Activated naive CD4-positive, alpha-beta T cell treated with anti-CD3 and anti-CD28 coated beads for 36 hours (primary cell): ENCODE measurements at regions of chr3 and their contacts with region 1.

Region 1: DNA sequence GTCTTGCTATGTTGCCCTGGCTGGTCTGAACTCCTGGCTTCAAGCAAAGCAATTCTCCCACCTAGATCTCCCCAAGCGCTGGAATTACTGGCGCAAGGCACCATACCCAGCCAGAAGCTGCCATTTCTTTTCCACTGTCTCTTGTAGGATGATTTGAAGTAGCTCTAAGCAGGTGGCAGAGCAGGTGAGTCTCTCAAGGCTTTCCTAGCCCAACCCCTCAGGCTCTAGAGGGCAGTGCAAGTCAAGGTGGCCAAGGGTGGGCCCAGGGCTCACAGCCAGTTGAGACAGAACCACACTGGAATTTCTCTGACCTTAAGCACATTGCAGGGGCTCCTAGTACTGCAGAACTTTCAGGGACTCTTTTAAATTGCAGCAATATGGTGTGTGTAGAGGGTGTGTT is 15.6 kb upstream of the DAG1 start:
- DNase-seq: peak; percentile 30
- H3K4me3 Mint-ChIP-seq: no peak overlapping the region
- H3K27ac Mint-ChIP-seq: no peak overlapping the region
- H3K4me1 Mint-ChIP-seq: no peaks in the 10 kb centered on the region
- H3K27me3 Mint-ChIP-seq: no peaks in the 10 kb centered on the region

Region 2: DNA sequence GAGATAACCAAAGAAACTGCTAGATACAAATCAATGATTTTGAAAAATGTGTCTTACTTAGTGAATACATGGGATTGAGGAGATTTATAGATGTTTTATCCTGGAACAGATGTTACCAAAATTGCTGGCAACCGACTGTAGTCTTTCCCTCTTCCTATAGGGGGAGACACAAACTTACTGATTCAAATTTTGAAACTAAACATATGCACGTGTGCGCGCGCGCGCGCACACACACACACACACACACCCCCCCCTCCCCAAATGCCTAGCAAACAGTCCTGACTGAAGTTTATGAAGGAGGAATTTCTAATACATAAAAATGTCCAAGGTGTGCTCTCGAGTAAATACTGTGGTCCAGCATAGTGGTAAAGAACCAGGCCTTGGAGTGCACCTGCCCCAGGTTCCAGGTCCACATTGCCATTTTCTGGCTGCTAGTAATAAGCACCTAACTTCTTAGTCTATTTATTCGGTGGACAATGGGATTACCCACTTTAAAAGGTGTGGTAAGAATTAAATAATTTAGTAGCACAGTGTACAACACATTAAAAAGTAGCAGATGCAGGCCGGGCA is 158.9 kb before region 1 on chr3:
- CTCF ChIA-PET with region 1: interaction called, 7 read pairs
- intact Hi-C with region 1: loop called (anchors 1 kb)
- DNase-seq: peak; percentile 51
- H3K4me3 Mint-ChIP-seq: no peak overlapping the region
- H3K27ac Mint-ChIP-seq: no peak overlapping the region
- H3K4me1 Mint-ChIP-seq: no peaks in the 10 kb centered on the region
- H3K27me3 Mint-ChIP-seq: no peaks in the 10 kb centered on the region

Region 3: GRCh38 chr3:49775538-49775937 is 321.1 kb after region 1 on chr3:
- CTCF ChIA-PET with region 1: no interaction called
- intact Hi-C with region 1: no loop called
- DNase-seq: no peak
- H3K4me3 Mint-ChIP-seq: no peak overlapping the region
- H3K27ac Mint-ChIP-seq: no peak overlapping the region
- H3K4me1 Mint-ChIP-seq: peaks cover 39% of the 10 kb centered on the region
- H3K27me3 Mint-ChIP-seq: no peaks in the 10 kb centered on the region